HCT116 (cell line): ENCODE measurements at regions of chr4 and their contacts with region 1.

Region 1: DNA sequence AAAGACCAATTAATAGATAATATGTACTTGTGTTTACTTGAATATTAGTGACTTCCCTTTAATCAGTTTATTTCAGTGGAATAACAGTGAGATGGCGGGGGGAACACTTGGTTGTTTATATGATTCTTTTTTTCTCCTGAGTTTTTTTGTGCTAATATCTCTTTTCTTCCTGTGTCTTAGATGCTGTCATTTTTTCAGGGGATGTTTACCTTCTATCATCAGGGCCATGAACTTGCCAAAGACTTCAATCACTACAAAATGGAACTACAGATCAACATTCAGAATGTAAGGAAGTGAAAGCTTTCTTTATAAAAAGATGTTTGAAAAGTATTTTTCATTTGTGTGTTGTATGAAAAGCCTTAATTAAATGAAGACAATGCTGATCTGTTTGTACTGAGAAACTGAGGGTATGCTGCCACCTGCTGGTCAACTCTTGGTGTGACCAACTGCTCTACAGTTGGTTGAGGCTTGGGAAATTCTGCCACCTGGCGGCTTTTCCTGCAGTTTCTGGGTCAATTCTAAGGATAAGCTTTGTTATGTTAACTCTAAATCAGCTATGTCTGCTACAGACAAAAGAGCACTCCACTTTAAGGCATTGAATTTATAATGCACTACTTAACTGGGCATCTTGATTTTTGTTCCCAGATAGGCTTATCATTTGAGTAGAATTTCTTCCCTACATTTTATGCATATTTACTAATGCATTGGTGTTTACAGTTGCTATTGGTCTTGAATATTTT is 134.8 kb downstream of the ARHGAP10 start:
- DNase-seq: peak; percentile 81
- ATAC-seq: peak; percentile 96
- H3K4me3 ChIP-seq: no peak overlapping the region
- H3K27ac ChIP-seq: no peak overlapping the region
- H3K4me1 ChIP-seq: no peaks in the 10 kb centered on the region
- H3K27me3 ChIP-seq: no peaks in the 10 kb centered on the region
- CTCF ChIP-seq: peak; percentile 97 to 100 (median 100)
- POLR2A ChIP-seq: no peak
- RAD21 ChIP-seq: peak; percentile 100

Region 2: GRCh38 chr4:147019061-147019460 is 847.6 kb before region 1 on chr4:
- CTCF ChIA-PET with region 1: interaction called, 6 read pairs
- POLR2A ChIA-PET with region 1: no interaction called
- RAD21 ChIA-PET with region 1: interaction called in 1 of 2 experiments, 4 read pairs
- intact Hi-C with region 1: loop called (anchors 1 kb)
- DNase-seq: peak; percentile 36
- ATAC-seq: peak; percentile 94
- H3K4me3 ChIP-seq: no peak overlapping the region
- H3K27ac ChIP-seq: no peak overlapping the region
- H3K4me1 ChIP-seq: no peaks in the 10 kb centered on the region
- H3K27me3 ChIP-seq: peaks cover 32% of the 10 kb centered on the region
- CTCF ChIP-seq: peak; percentile 65 to 72 (median 67); a peak in 5 of 6 replicates
- POLR2A ChIP-seq: no peak
- RAD21 ChIP-seq: peak; percentile 89

Region 3: GRCh38 chr4:147518846-147519767 is 347.6 kb before region 1 on chr4:
- CTCF ChIA-PET with region 1: interaction called, 20 read pairs
- POLR2A ChIA-PET with region 1: no interaction called
- RAD21 ChIA-PET with region 1: interaction called in 1 of 2 experiments, 4 read pairs
- intact Hi-C with region 1: loop called (anchors 2 kb)
- DNase-seq: peak; percentile 59
- ATAC-seq: peak; percentile 92
- H3K4me3 ChIP-seq: no peak overlapping the region
- H3K27ac ChIP-seq: no peak overlapping the region
- H3K4me1 ChIP-seq: no peaks in the 10 kb centered on the region
- H3K27me3 ChIP-seq: no peaks in the 10 kb centered on the region
- CTCF ChIP-seq: peak; percentile 65 to 96 (median 95); a peak in 5 of 6 replicates
- POLR2A ChIP-seq: no peak
- RAD21 ChIP-seq: peak; percentile 78

Region 4: GRCh38 chr4:147617173-147617840 is 249.4 kb before region 1 on chr4 and contains the start of gene TMEM184C:
- CTCF ChIA-PET with region 1: interaction called, 27 read pairs
- POLR2A ChIA-PET with region 1: interaction called, 7 read pairs
- RAD21 ChIA-PET with region 1: interaction called in 1 of 2 experiments, 3 read pairs
- intact Hi-C with region 1: loop called (anchors 2 kb)
- DNase-seq: peak; percentile 90
- ATAC-seq: peak; percentile 99
- H3K4me3 ChIP-seq: peak within 1 kb of the TSS; percentile 72 to 97
- H3K27ac ChIP-seq: peak within 1 kb of the TSS; percentile 53
- H3K4me1 ChIP-seq: peaks cover 5 to 10% of the 10 kb centered on the region in 2 experiments; a peak in 2 of 4 replicates
- H3K27me3 ChIP-seq: no peaks in the 10 kb centered on the region
- CTCF ChIP-seq: no peak
- POLR2A ChIP-seq: peak; percentile 66
- RAD21 ChIP-seq: no peak
- total RNA-seq, gene TMEM184C: 24.6 TPM

Region 5: GRCh38 chr4:147693218-147693617 is 173.5 kb before region 1 on chr4:
- CTCF ChIA-PET with region 1: interaction called, 8 read pairs
- POLR2A ChIA-PET with region 1: no interaction called
- RAD21 ChIA-PET with region 1: no interaction called
- intact Hi-C with region 1: loop called (anchors 5 kb)
- DNase-seq: no peak
- ATAC-seq: no peak
- H3K4me3 ChIP-seq: no peak overlapping the region
- H3K27ac ChIP-seq: no peak overlapping the region
- H3K4me1 ChIP-seq: no peaks in the 10 kb centered on the region
- H3K27me3 ChIP-seq: no peaks in the 10 kb centered on the region
- CTCF ChIP-seq: no peak
- POLR2A ChIP-seq: no peak
- RAD21 ChIP-seq: no peak

Region 6: GRCh38 chr4:147786031-147786430 is 80.7 kb before region 1 on chr4:
- CTCF ChIA-PET with region 1: interaction called, 10 read pairs
- POLR2A ChIA-PET with region 1: no interaction called
- RAD21 ChIA-PET with region 1: no interaction called
- intact Hi-C with region 1: no loop called
- DNase-seq: no peak
- ATAC-seq: no peak
- H3K4me3 ChIP-seq: no peak overlapping the region
- H3K27ac ChIP-seq: no peak overlapping the region
- H3K4me1 ChIP-seq: peaks cover 36 to 61% of the 10 kb centered on the region in 2 experiments
- H3K27me3 ChIP-seq: no peaks in the 10 kb centered on the region
- CTCF ChIP-seq: no peak
- POLR2A ChIP-seq: no peak
- RAD21 ChIP-seq: no peak